ENCODE measurements at regions of chr16 and their contacts with region 1.

Region 1: DNA sequence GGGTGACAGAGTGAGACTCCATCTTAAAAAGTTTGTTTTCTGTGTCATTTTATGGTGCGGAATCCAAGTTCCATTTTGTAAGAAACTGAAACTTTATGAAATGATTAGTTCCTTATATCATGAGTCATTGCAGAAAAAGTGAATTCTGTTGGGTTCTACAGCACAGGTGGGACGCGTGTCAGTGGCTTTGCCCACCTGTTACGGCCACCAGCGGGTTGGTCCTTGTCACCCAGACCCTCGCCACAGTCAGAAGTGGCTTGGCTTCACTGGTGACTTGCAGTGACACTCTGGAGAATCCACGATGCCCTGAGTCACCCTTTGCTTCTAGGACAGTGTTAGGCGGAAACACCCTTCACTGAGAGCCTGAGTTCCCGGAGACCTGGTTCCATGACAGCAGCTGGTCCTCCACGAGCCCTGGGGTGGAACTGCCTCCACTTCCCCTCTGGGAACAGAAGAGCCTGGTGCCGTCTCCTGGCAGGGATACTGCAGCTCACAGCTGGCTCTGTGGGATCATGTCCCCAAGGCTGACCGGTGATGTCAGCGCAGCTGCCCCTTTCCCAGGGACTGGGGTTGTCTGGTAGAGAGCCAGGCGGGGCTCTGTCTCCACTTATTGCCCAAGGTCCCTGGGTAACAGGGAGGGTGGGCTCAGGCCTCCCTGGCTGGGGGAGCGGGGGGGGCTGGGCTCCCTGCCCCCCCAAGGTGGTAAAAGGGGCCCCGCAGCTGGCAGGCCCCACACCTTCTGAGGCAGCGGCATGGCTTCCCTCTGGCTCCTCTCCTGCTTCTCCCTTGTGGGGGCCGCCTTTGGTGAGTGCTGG is at the start of gene CTRB1:
- DNase-seq: no peak
- H3K4me3 ChIP-seq: no peak within 1 kb of the TSS
- H3K27ac ChIP-seq: no peak within 1 kb of the TSS
- H3K4me1 ChIP-seq: no peaks in the 10 kb centered on the region
- H3K27me3 ChIP-seq: no peaks in the 10 kb centered on the region
- CTCF ChIP-seq: no peak
- EP300 ChIP-seq: no peak
- POLR2A ChIP-seq: no peak
- total RNA-seq, gene CTRB1: not detected

Region 2: DNA sequence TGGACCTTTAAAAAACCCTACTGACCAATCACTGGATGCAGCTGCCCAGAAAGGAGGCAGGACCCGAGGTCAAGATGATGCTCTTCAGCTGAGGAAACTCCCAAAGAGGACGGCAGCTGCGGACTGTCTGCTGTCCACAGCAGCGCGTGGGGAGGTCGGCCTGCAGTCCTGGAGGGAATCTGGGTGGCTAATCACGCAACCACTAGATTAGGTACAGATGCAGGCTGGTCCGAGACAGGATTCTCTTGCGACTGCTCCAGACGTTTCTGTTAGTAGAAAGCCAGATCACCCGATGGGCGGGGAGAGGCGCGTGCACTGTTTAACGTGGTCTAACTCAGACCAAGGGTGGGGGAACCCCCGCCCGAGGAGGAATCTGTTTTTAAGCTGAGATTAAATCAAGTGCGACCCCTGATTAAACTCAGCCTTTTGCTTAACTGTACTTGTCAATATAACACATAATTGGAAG is 20.3 kb before region 1 on chr16:
- in situ Hi-C with region 1: no loop called
- intact Hi-C with region 1: loop called (anchors 2 kb)
- DNase-seq: no peak
- H3K4me3 ChIP-seq: no peak overlapping the region
- H3K27ac ChIP-seq: no peak overlapping the region
- H3K4me1 ChIP-seq: peaks cover 0 to 13% (median 3%) of the 10 kb centered on the region in 4 donors
- H3K27me3 ChIP-seq: peaks cover 26% of the 10 kb centered on the region
- CTCF ChIP-seq: no peak
- EP300 ChIP-seq: no peak
- POLR2A ChIP-seq: no peak

Region 3: DNA sequence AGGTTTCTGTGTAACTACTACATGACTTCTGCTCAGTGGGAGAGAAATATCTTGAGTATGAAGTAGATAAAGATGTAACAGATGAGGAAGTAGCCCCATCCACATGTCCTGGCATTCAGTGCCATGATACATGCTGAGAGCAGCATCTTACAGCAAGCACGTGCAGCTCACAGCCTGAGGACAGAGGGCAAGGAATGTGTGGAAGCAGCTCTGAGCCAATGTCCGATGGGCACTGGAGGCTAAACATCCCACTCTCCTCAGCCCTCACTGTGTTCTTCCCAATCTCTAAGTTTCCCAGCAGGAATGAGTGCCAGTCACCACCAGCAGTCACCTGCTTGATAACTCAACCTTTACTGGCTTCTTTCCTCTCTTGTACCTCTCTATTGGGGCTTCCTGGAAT is 174.4 kb after region 1 on chr16:
- in situ Hi-C with region 1: loop called in 3 of 4 experiments (anchors 5 to 25 kb)
- intact Hi-C with region 1: no loop called
- DNase-seq: no peak
- H3K4me3 ChIP-seq: no peak overlapping the region
- H3K27ac ChIP-seq: no peak overlapping the region
- H3K4me1 ChIP-seq: peaks cover 0 to 4% (median 0%) of the 10 kb centered on the region in 4 donors
- H3K27me3 ChIP-seq: no peaks in the 10 kb centered on the region
- CTCF ChIP-seq: no peak
- EP300 ChIP-seq: no peak
- POLR2A ChIP-seq: no peak

Region 4: GRCh38 chr16:75695704-75696103 is 477.2 kb after region 1 on chr16:
- in situ Hi-C with region 1: no loop called
- intact Hi-C with region 1: no loop called
- DNase-seq: no peak
- H3K4me3 ChIP-seq: no peak overlapping the region
- H3K27ac ChIP-seq: no peak overlapping the region
- H3K4me1 ChIP-seq: no peaks in the 10 kb centered on the region
- H3K27me3 ChIP-seq: no peaks in the 10 kb centered on the region
- CTCF ChIP-seq: peak in 1 of 5 experiments; percentile 13
- EP300 ChIP-seq: no peak
- POLR2A ChIP-seq: no peak

Measured in transverse colon (tissue), 4 donors.